ENCODE measurements at regions of chr12 and their contacts with region 1.

Region 1: DNA sequence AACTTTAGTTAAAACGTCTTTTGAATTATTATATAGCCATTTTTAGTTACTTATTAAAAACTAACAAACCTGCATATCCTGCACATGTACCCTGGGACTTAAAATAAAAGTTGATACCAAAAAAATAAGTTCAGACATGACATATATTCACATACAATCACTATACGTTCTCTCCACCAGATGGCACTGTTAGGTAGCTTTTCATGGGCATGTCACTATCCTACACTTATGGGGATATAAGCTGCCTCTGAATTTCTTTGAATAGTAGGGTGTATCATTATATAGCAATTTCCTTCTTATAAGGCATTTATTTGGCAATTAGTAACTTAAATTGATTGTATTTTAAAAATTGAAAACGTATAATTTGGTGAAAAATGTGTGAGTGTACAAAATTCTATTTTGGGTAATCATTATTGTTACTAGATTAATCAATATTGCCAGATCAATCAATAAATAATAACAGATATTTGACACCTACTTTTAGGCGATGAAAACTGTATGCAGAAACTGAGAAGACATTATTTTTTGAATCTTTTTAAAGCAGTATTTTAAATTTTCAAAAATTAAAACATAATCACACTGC is 31.8 kb upstream of the OR10A7 start:
- DNase-seq: no peak
- H3K4me3 Mint-ChIP-seq: no peak overlapping the region
- H3K27ac Mint-ChIP-seq: no peak overlapping the region
- H3K4me1 Mint-ChIP-seq: no peaks in the 10 kb centered on the region
- H3K27me3 Mint-ChIP-seq: peaks cover 14% of the 10 kb centered on the region

Region 2: DNA sequence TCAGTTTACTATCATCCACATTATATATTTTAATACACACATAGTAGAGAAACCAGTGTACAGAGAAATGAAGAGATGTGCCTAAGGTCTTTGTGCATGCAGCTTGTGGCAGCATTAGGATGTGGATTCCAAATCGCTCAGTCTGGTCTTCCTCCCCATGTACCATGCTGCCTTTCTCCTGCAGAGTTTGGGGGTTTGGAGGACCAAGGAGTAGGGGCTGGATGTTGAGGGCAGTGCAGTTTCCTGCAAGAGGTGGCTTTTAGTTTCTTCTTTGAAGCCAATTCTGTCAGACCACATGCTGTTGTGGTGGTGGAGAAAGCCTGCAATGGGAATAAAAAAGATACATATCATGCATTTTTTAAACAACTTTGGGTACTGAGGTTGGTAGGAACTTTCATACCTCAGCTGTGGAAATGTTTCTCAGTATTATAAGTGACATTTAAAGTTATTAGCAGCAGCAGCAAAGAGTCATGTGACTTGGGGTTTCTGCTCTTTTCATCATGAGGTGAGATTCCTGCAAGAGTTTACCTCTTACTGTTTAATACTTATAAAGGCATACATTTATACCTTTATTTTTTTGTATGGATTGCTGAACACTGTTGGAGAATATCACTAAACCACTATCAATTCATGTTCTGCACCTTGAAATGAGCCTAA is 238.9 kb before region 1 on chr12:
- intact Hi-C with region 1: no loop called
- DNase-seq: no peak
- H3K4me3 Mint-ChIP-seq: no peak overlapping the region
- H3K27ac Mint-ChIP-seq: peak overlapping the region; percentile 38
- H3K4me1 Mint-ChIP-seq: peaks cover 36% of the 10 kb centered on the region
- H3K27me3 Mint-ChIP-seq: no peaks in the 10 kb centered on the region

Region 3: GRCh38 chr12:55262587-55262986 is 73.5 kb after region 1 on chr12:
- intact Hi-C with region 1: no loop called
- DNase-seq: no peak
- H3K4me3 Mint-ChIP-seq: no peak overlapping the region
- H3K27ac Mint-ChIP-seq: no peak overlapping the region
- H3K4me1 Mint-ChIP-seq: no peaks in the 10 kb centered on the region
- H3K27me3 Mint-ChIP-seq: peaks cover 2% of the 10 kb centered on the region

Region 4: GRCh38 chr12:55619354-55620138 is 430.5 kb after region 1 on chr12:
- intact Hi-C with region 1: loop called (anchors 1 kb)
- DNase-seq: peak; percentile 38
- H3K4me3 Mint-ChIP-seq: no peak overlapping the region
- H3K27ac Mint-ChIP-seq: no peak overlapping the region
- H3K4me1 Mint-ChIP-seq: peaks cover 5% of the 10 kb centered on the region
- H3K27me3 Mint-ChIP-seq: peaks cover 10% of the 10 kb centered on the region

Region 5: DNA sequence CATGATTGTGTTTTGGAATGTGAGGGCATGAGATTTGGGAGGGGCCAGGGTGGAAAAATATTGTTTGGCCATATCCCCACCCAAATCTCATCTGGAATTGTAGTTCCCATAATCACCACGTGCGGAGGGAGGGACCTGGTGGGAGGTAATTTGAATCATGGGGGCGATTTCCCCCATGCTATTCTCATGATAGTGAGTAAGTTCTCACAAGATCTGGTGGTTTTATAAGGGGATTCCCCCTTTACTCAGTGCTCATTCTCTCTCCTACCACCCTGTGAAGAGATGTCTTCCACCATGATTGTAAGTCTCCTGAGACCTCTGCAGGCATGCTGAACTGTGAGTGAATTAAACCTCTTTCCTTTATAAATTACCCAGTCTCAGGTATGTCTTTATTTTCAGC is 463.3 kb after region 1 on chr12:
- intact Hi-C with region 1: loop called (anchors 2 kb)
- DNase-seq: no peak
- H3K4me3 Mint-ChIP-seq: no peak overlapping the region
- H3K27ac Mint-ChIP-seq: no peak overlapping the region
- H3K4me1 Mint-ChIP-seq: peaks cover 14% of the 10 kb centered on the region
- H3K27me3 Mint-ChIP-seq: peaks cover 3% of the 10 kb centered on the region

Measured in activated T-helper 2 cell treated with anti-CD3 and anti-CD28 coated beads, Interferon-gamma antibody, Interleukin-2, Interleukin-4, amounts not matched to agents 10 μg/mL and 5 μg/mL and 100 μg/mL, durations not matched to agents 14 hours and 24 hours and 36 hours (primary cell).